Activated B cell treated with CpG ODN at 0.5 μM for 24 hours (primary cell): ENCODE measurements at regions of chr1 and their contacts with region 1.

Region 1: GRCh38 chr1:95233737-95234500 is at the start of gene RWDD3:
- DNase-seq: peak; percentile 97
- ATAC-seq: peak; percentile 96
- H3K4me3 Mint-ChIP-seq: peak within 1 kb of the TSS; percentile 92
- H3K27ac Mint-ChIP-seq: peak within 1 kb of the TSS; percentile 84
- H3K4me1 Mint-ChIP-seq: peaks cover 38% of the 10 kb centered on the region
- H3K27me3 Mint-ChIP-seq: peaks cover 4% of the 10 kb centered on the region
- CTCF ChIP-seq: peak; percentile 37
- total RNA-seq, gene RWDD3: 17.1 and 18.9 TPM in 2 replicates

Region 2: GRCh38 chr1:93909146-93910050 is 1324.5 kb before region 1 on chr1 and contains the start of gene GCLM:
- CTCF ChIA-PET with region 1: no interaction called
- POLR2A ChIA-PET with region 1: no interaction called
- intact Hi-C with region 1: loop called (anchors 5 kb)
- DNase-seq: peak; percentile 95
- ATAC-seq: peak; percentile 92
- H3K4me3 Mint-ChIP-seq: peak within 1 kb of the TSS; percentile 89
- H3K27ac Mint-ChIP-seq: peak within 1 kb of the TSS; percentile 87
- H3K4me1 Mint-ChIP-seq: peaks cover 25% of the 10 kb centered on the region
- H3K27me3 Mint-ChIP-seq: no peaks in the 10 kb centered on the region
- CTCF ChIP-seq: peak; percentile 48
- total RNA-seq, gene GCLM: 8.6 and 9.6 TPM in 2 replicates

Region 3: GRCh38 chr1:94854458-94855306 is 379.2 kb before region 1 on chr1:
- CTCF ChIA-PET with region 1: interaction called, 33 read pairs
- POLR2A ChIA-PET with region 1: interaction called, 10 read pairs
- intact Hi-C with region 1: loop called (anchors 1 kb)
- DNase-seq: peak; percentile 54
- ATAC-seq: peak; percentile 98
- H3K4me3 Mint-ChIP-seq: no peak overlapping the region
- H3K27ac Mint-ChIP-seq: no peak overlapping the region
- H3K4me1 Mint-ChIP-seq: no peaks in the 10 kb centered on the region
- H3K27me3 Mint-ChIP-seq: peaks cover 8% of the 10 kb centered on the region
- CTCF ChIP-seq: no peak

Region 4: DNA sequence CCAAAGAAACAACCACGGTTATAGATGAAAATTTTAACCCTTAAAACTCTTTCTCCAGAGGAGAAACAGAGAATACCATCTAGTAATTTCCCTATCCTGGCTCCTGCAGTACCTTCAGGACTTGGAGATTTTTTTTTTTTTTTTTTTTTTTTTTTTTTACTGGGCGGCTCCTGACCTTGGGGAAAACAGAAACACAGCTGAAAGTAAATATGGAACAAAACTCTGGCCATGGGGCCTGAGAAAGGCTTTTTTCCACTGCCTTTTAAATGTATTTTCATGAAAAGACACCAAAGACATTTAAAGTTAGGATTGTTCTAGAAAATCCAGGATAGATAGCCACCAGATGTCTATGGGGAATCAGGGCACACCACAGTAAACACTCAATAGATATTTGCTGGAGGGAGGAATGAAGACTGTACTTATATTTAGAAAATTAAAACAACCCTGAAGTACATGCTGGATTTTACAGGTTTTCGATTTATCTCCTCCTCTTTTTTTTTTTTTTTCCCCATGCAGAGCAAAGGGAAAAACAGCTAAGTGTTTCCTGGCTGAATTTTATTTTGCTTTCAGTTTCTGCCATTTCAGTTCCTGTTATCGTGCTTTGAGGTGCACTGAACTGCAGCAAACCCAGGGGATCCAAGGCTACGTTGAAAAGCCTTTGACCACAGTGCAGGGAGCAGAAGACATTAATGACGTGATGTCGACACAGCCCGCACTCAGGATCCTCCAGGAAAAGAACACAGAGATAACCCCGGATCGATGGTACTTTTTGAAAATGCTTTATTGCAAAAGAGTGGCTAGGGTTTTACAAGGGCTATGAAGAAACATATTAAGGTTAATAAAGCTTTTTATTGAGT is 271.3 kb before region 1 on chr1:
- CTCF ChIA-PET with region 1: no interaction called
- POLR2A ChIA-PET with region 1: no interaction called
- intact Hi-C with region 1: loop called (anchors 5 kb)
- DNase-seq: peak; percentile 17
- ATAC-seq: peak; percentile 96
- H3K4me3 Mint-ChIP-seq: peak overlapping the region; percentile 84
- H3K27ac Mint-ChIP-seq: peak overlapping the region; percentile 94
- H3K4me1 Mint-ChIP-seq: peaks cover 29% of the 10 kb centered on the region
- H3K27me3 Mint-ChIP-seq: no peaks in the 10 kb centered on the region
- CTCF ChIP-seq: no peak

Region 5: GRCh38 chr1:95072532-95073419 is 161.1 kb before region 1 on chr1 and contains the start of gene ALG14:
- CTCF ChIA-PET with region 1: interaction called, 8 read pairs
- POLR2A ChIA-PET with region 1: interaction called, 25 read pairs
- intact Hi-C with region 1: loop called (anchors 1 kb)
- DNase-seq: peak; percentile 88
- ATAC-seq: peak; percentile 96
- H3K4me3 Mint-ChIP-seq: peak within 1 kb of the TSS; percentile 100
- H3K27ac Mint-ChIP-seq: peak within 1 kb of the TSS; percentile 99
- H3K4me1 Mint-ChIP-seq: peaks cover 20% of the 10 kb centered on the region
- H3K27me3 Mint-ChIP-seq: peaks cover 3% of the 10 kb centered on the region
- CTCF ChIP-seq: no peak
- total RNA-seq, gene ALG14: 3.7 and 7.5 TPM in 2 replicates

Region 6: DNA sequence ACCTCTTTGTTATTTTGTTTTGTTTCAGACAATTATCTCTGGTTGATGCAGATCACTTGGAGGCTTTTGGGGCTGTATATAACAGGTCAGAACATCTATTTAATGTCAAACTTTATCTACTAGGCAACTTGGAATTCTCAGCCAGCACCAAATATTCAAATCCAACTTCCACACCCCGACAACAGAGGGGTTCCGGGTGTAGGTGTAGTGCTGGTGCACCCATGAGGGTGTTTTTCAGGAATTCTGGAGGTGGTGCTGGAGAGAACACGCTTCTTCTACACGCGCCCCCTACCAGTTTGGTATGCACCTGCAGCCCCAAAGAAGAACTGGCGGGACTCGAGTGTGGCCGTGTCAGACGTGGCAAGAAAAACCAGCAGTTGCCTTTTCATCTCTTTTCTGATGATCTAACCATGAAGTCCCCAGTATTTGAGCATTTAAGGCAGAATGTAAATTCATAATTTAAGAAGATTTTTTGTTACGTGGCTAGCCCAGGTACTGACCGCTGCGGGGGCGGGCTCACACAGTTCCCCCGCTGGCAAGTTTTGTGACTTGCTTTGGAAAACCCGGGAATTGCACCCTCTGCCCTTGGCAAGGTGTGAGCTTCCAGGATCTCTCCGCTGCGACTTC is 117.2 kb before region 1 on chr1:
- CTCF ChIA-PET with region 1: interaction called, 13 read pairs
- POLR2A ChIA-PET with region 1: interaction called, 10 read pairs
- intact Hi-C with region 1: loop called (anchors 1 kb)
- DNase-seq: peak; percentile 31
- ATAC-seq: peak; percentile 82
- H3K4me3 Mint-ChIP-seq: peak overlapping the region; percentile 93
- H3K27ac Mint-ChIP-seq: peak overlapping the region; percentile 74
- H3K4me1 Mint-ChIP-seq: peaks cover 7% of the 10 kb centered on the region
- H3K27me3 Mint-ChIP-seq: peaks cover 41% of the 10 kb centered on the region
- CTCF ChIP-seq: peak; percentile 76